ENCODE measurements at regions of chr4 and their contacts with region 1.

Region 1: DNA sequence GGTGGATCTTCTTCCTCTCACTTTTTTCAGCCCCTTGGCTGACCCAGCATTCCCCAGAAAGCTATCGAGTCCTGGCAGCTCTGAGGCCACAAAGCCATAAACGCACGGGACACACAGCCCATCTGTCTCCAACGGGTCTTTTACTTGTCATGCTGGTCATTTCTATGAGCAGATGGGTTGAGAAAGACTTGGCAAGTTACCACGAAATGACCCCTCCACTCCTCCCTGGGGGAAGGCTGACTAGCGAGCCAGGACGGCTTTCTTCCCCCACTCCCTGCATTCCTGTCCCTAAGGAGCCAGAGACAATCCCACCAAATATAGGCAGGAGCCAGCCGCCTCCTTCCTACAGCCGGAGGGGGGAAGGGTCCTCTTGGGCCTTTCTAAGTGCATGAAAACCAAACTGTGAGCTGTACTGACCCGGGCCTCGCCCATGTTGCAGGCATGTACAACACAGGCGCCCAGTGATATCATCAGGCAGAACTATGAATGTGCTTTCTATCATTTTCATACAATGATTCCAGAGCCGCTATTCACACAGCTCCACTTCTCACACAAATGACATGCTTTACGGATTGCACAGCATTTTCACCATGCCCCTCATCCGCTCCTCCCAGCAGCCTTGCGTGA is 28.6 kb downstream of the AFAP1 start:
- DNase-seq: peak; percentile 74
- H3K4me3 ChIP-seq: peak overlapping the region in 3 of 4 donors; percentile 1 to 18 (median 15)
- H3K27ac ChIP-seq: peak overlapping the region; percentile 83 to 94 (median 88)
- H3K4me1 ChIP-seq: peaks cover 0 to 94% (median 71%) of the 10 kb centered on the region in 4 donors
- H3K27me3 ChIP-seq: no peaks in the 10 kb centered on the region
- CTCF ChIP-seq: no peak
- EP300 ChIP-seq: peak in 1 of 4 donors; percentile 18
- POLR2A ChIP-seq: no peak

Region 2: GRCh38 chr4:7042697-7043464 is 868.2 kb before region 1 on chr4 and contains the start of gene TADA2B:
- intact Hi-C with region 1: no loop called
- DNase-seq: peak; percentile 99
- H3K4me3 ChIP-seq: peak within 1 kb of the TSS; percentile 86 to 99 (median 98)
- H3K27ac ChIP-seq: peak within 1 kb of the TSS; percentile 91 to 95 (median 92)
- H3K4me1 ChIP-seq: peaks cover 0 to 51% (median 47%) of the 10 kb centered on the region in 4 donors
- H3K27me3 ChIP-seq: no peaks in the 10 kb centered on the region
- CTCF ChIP-seq: peak in 1 of 4 experiments; percentile 30
- EP300 ChIP-seq: no peak
- POLR2A ChIP-seq: no peak
- total RNA-seq, gene TADA2B: 15.0 to 22.7 (median 17.2) TPM

Region 3: GRCh38 chr4:7876201-7876875 is 34.7 kb before region 1 on chr4:
- intact Hi-C with region 1: loop called (anchors 5 kb)
- DNase-seq: peak; percentile 72
- H3K4me3 ChIP-seq: peak overlapping the region in 3 of 4 donors; percentile 3 to 28 (median 18)
- H3K27ac ChIP-seq: peak overlapping the region; percentile 54 to 89 (median 80)
- H3K4me1 ChIP-seq: peaks cover 0 to 88% (median 77%) of the 10 kb centered on the region in 4 donors
- H3K27me3 ChIP-seq: no peaks in the 10 kb centered on the region
- CTCF ChIP-seq: peak in 1 of 4 experiments; percentile 20
- EP300 ChIP-seq: no peak
- POLR2A ChIP-seq: no peak